Activated CD4-positive, alpha-beta T cell treated with anti-CD3 and anti-CD28 coated beads, Interleukin-2, amount 10 ng/mL, durations not matched to agents 24 days and 14 days (primary cell): ENCODE measurements at regions of chr12 and their contacts with region 1.

Region 1: GRCh38 chr12:9027161-9028059 is 38.1 kb downstream of the KLRG1 start:
- DNase-seq: peak; percentile 73
- H3K4me3 Mint-ChIP-seq: peak overlapping the region; percentile 8
- H3K27ac Mint-ChIP-seq: peak overlapping the region; percentile 82
- H3K4me1 Mint-ChIP-seq: peaks cover 14% of the 10 kb centered on the region
- H3K27me3 Mint-ChIP-seq: peaks cover 2% of the 10 kb centered on the region

Region 2: GRCh38 chr12:8644345-8645248 is 382.8 kb before region 1 on chr12:
- intact Hi-C with region 1: loop called (anchors 1 kb)
- DNase-seq: peak; percentile 89
- H3K4me3 Mint-ChIP-seq: peak overlapping the region; percentile 72
- H3K27ac Mint-ChIP-seq: peak overlapping the region; percentile 77
- H3K4me1 Mint-ChIP-seq: peaks cover 41% of the 10 kb centered on the region
- H3K27me3 Mint-ChIP-seq: peaks cover 43% of the 10 kb centered on the region

Region 3: DNA sequence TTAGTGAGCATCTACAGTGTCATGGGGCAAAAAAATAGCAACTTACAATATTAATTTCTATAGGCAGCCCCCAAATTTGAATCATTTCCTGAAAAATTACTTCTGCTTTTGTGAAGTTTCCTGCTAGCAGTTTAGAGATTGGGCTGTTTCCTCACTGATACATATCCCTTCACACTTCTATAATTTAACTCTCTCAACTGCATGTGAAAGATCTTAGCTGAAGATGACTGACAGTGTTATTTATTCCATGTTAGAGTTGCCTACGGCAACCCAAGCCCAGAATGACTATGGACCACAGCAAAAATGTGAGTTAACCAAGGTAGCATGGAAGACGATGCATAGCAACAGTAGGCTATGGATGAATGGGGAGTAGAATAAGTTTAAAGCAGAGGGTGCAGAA is 38.0 kb before region 1 on chr12 and contains the start of gene KLRG1:
- intact Hi-C with region 1: loop called (anchors 5 kb)
- DNase-seq: no peak
- H3K4me3 Mint-ChIP-seq: peak within 1 kb of the TSS; percentile 6
- H3K27ac Mint-ChIP-seq: no peak within 1 kb of the TSS
- H3K4me1 Mint-ChIP-seq: peaks cover 28% of the 10 kb centered on the region
- H3K27me3 Mint-ChIP-seq: peaks cover 4% of the 10 kb centered on the region
- total RNA-seq, gene KLRG1: 0.71 and 0.84 TPM in 2 replicates

Region 4: GRCh38 chr12:9039397-9039977 is 12.1 kb after region 1 on chr12:
- intact Hi-C with region 1: loop called (anchors 2 kb)
- DNase-seq: peak; percentile 76
- H3K4me3 Mint-ChIP-seq: no peak overlapping the region
- H3K27ac Mint-ChIP-seq: no peak overlapping the region
- H3K4me1 Mint-ChIP-seq: peaks cover 19% of the 10 kb centered on the region
- H3K27me3 Mint-ChIP-seq: peaks cover 12% of the 10 kb centered on the region

Region 5: GRCh38 chr12:9179781-9180180 is 152.4 kb after region 1 on chr12:
- intact Hi-C with region 1: no loop called
- DNase-seq: no peak
- H3K4me3 Mint-ChIP-seq: no peak overlapping the region
- H3K27ac Mint-ChIP-seq: no peak overlapping the region
- H3K4me1 Mint-ChIP-seq: no peaks in the 10 kb centered on the region
- H3K27me3 Mint-ChIP-seq: no peaks in the 10 kb centered on the region

Region 6: GRCh38 chr12:9961106-9961505 is 933.7 kb after region 1 on chr12:
- intact Hi-C with region 1: no loop called
- DNase-seq: no peak
- H3K4me3 Mint-ChIP-seq: no peak overlapping the region
- H3K27ac Mint-ChIP-seq: no peak overlapping the region
- H3K4me1 Mint-ChIP-seq: peaks cover 34% of the 10 kb centered on the region
- H3K27me3 Mint-ChIP-seq: no peaks in the 10 kb centered on the region